Activated B cell treated with CpG ODN at 0.5 μM for 24 hours (primary cell): ENCODE measurements at regions of chr13 and their contacts with region 1.

Region 1: GRCh38 chr13:48303359-48304142 is at the start of gene RB1:
- DNase-seq: peak; percentile 90
- ATAC-seq: peak; percentile 71
- H3K4me3 Mint-ChIP-seq: peak within 1 kb of the TSS; percentile 99
- H3K27ac Mint-ChIP-seq: peak within 1 kb of the TSS; percentile 100
- H3K4me1 Mint-ChIP-seq: peaks cover 39% of the 10 kb centered on the region
- H3K27me3 Mint-ChIP-seq: no peaks in the 10 kb centered on the region
- CTCF ChIP-seq: no peak
- total RNA-seq, gene RB1: 61.1 and 70.5 TPM in 2 replicates

Region 2: DNA sequence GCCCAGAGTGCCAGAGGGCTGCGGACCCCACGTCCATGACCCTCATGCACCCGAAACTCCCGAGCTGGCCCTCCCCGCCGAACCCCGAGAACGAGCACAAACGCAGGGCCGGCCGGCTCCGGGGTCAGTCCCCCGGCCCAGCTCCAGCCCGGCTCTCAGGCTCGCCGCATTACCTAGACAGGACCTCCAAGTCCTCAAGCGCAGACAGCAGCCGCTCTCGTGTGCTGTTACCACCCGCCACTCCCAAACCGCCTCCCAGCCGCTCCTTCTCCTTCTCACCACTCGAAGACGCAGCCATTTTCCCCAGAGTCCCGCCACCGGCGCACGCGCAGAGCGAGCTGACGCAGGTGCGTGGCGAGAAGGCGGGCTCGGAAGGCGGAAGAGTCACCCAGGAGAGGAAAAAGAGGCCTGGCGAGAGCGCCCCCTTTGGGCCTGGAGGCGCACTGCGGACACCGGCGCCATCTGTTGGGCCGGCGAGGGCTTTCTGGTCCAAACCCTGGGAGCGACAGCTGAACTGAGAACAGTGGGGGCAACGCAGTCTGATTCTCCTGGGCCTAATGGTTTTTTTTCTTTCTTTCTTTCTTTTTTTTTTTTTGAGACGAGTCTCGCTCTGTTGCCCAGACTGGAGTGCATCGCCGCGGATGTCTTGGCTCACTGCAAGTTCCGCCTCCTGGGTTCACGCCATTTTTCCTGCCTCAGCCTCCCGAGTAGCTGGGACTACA is 208.6 kb before region 1 on chr13 and contains the start of gene MED4:
- CTCF ChIA-PET with region 1: interaction called, 5 read pairs
- POLR2A ChIA-PET with region 1: interaction called, 5 read pairs
- intact Hi-C with region 1: loop called (anchors 1 kb)
- DNase-seq: peak; percentile 99
- ATAC-seq: peak; percentile 99
- H3K4me3 Mint-ChIP-seq: peak within 1 kb of the TSS; percentile 96
- H3K27ac Mint-ChIP-seq: peak within 1 kb of the TSS; percentile 90
- H3K4me1 Mint-ChIP-seq: peaks cover 34% of the 10 kb centered on the region
- H3K27me3 Mint-ChIP-seq: peaks cover 5% of the 10 kb centered on the region
- CTCF ChIP-seq: peak; percentile 84
- total RNA-seq, gene MED4: 50.4 and 51.9 TPM in 2 replicates

Region 3: GRCh38 chr13:48120241-48120640 is 183.3 kb before region 1 on chr13:
- CTCF ChIA-PET with region 1: no interaction called
- POLR2A ChIA-PET with region 1: no interaction called
- intact Hi-C with region 1: no loop called
- DNase-seq: no peak
- ATAC-seq: no peak
- H3K4me3 Mint-ChIP-seq: no peak overlapping the region
- H3K27ac Mint-ChIP-seq: no peak overlapping the region
- H3K4me1 Mint-ChIP-seq: no peaks in the 10 kb centered on the region
- H3K27me3 Mint-ChIP-seq: peaks cover 17% of the 10 kb centered on the region
- CTCF ChIP-seq: no peak

Region 4: DNA sequence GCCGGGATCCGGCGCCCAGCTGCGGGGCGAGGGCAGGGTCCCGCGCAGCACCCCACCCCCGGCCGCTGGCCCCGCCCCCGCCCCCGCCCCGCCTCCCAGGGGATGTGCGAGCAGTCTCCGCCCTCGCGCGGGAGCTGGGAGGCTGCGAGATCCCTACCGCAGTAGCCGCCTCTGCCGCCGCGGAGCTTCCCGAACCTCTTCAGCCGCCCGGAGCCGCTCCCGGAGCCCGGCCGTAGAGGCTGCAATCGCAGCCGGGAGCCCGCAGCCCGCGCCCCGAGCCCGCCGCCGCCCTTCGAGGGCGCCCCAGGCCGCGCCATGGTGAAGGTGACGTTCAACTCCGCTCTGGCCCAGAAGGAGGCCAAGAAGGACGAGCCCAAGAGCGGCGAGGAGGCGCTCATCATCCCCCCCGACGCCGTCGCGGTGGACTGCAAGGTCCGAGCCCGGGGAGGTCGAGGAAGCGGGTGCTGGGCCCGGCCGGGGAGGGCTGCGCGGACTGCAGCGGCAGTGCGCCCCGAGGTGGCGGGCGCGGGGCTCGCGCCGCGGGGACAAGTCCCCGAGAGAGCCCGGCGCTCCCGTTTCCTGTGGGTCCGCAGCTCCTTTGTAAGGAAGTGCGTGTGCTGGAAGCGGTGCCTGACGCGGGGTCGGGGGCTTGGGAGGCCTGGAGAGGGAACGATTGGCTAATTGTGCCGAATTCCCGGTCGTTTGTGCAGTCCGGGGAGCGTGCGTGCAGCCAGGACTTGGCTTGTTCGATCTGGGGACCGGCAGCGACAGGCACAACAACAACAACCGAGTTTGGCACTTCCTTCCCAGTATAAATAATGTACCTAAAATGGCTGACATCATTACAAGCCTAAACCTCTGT is 70.3 kb before region 1 on chr13 and contains the start of gene ITM2B:
- CTCF ChIA-PET with region 1: no interaction called
- POLR2A ChIA-PET with region 1: interaction called, 40 read pairs
- intact Hi-C with region 1: loop called (anchors 1 kb)
- DNase-seq: peak; percentile 65
- ATAC-seq: peak; percentile 76
- H3K4me3 Mint-ChIP-seq: peak within 1 kb of the TSS; percentile 93
- H3K27ac Mint-ChIP-seq: peak within 1 kb of the TSS; percentile 87
- H3K4me1 Mint-ChIP-seq: peaks cover 54% of the 10 kb centered on the region
- H3K27me3 Mint-ChIP-seq: peaks cover 7% of the 10 kb centered on the region
- CTCF ChIP-seq: no peak
- total RNA-seq, gene ITM2B: 102 and 114 TPM in 2 replicates

Region 5: GRCh38 chr13:48334534-48335127 is 31.1 kb after region 1 on chr13:
- CTCF ChIA-PET with region 1: interaction called, 6 read pairs
- POLR2A ChIA-PET with region 1: interaction called, 11 read pairs
- intact Hi-C with region 1: loop called (anchors 1 kb)
- DNase-seq: no peak
- ATAC-seq: peak; percentile 37
- H3K4me3 Mint-ChIP-seq: no peak overlapping the region
- H3K27ac Mint-ChIP-seq: no peak overlapping the region
- H3K4me1 Mint-ChIP-seq: peaks cover 17% of the 10 kb centered on the region
- H3K27me3 Mint-ChIP-seq: no peaks in the 10 kb centered on the region
- CTCF ChIP-seq: peak; percentile 42

Region 6: DNA sequence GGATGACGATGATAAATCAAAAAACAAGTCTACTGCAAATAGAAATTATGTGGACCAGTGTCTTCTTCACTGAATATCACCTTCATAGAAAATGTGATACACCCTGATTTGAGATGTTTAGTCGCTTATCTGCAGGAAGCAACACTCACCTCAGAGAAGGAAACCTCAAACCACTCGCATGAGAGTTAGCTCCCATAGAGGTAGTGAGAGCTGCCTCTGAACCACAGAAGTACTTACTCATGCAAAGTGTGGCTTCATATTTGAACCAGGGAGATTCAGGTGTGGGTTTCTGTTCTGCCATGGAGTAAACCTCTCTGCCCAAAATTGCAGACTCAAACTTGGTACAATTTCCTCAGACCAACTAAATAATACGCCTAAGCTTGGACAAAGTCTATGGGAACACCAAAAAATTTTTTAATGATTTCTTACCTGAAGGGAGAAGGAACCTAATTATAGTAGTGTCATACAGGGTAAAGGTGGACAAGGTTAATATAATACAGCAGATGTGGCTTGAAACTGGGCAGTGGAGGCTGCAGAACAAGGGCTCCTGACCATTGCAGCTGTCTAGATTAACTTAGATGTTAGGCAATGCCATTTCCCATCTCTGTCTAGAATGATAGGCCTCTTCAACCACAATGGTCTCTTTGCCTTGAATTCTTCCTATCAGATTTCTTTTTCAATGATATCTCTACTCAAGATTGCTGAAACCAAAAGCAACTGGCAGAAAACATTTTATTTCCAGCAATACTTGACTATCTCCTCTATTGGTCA is 258.9 kb after region 1 on chr13:
- CTCF ChIA-PET with region 1: no interaction called
- POLR2A ChIA-PET with region 1: interaction called, 4 read pairs
- intact Hi-C with region 1: loop called (anchors 1 kb)
- DNase-seq: no peak
- ATAC-seq: peak; percentile 99
- H3K4me3 Mint-ChIP-seq: no peak overlapping the region
- H3K27ac Mint-ChIP-seq: peak overlapping the region; percentile 57
- H3K4me1 Mint-ChIP-seq: peaks cover 24% of the 10 kb centered on the region
- H3K27me3 Mint-ChIP-seq: peaks cover 59% of the 10 kb centered on the region
- CTCF ChIP-seq: no peak

Region 7: DNA sequence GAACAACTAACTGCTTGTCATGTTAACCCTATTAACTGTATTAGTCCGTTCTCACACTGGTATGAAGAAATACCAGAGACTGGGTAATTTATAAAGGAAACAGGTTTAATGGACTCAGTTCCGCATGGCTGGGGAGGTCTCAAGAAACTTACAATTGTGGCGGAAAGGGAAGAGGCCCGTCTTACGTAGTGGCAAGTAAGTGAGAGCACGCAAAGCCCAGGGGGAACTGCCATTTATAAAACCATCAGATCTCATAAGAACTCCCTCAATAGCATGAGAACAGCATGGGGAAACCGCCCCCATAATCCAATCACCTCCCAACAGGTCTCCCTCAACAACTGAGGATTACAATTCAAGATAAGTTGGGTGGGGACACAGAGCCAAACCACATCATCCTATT is 1226.9 kb after region 1 on chr13:
- CTCF ChIA-PET with region 1: no interaction called
- POLR2A ChIA-PET with region 1: no interaction called
- intact Hi-C with region 1: loop called (anchors 10 kb)
- DNase-seq: peak; percentile 30
- ATAC-seq: peak; percentile 88
- H3K4me3 Mint-ChIP-seq: peak overlapping the region; percentile 67
- H3K27ac Mint-ChIP-seq: peak overlapping the region; percentile 89
- H3K4me1 Mint-ChIP-seq: peaks cover 73% of the 10 kb centered on the region
- H3K27me3 Mint-ChIP-seq: no peaks in the 10 kb centered on the region
- CTCF ChIP-seq: no peak